OCI-LY7 (cell line): ENCODE measurements at regions of chr11 and their contacts with region 1.

Region 1: GRCh38 chr11:129922674-129923073 is 27.3 kb upstream of the NFRKB start:
- DNase-seq: no peak
- H3K4me3 ChIP-seq: no peak overlapping the region
- H3K27ac ChIP-seq: no peak overlapping the region
- H3K4me1 ChIP-seq: peaks cover 20% of the 10 kb centered on the region
- CTCF ChIP-seq: no peak

Region 2: DNA sequence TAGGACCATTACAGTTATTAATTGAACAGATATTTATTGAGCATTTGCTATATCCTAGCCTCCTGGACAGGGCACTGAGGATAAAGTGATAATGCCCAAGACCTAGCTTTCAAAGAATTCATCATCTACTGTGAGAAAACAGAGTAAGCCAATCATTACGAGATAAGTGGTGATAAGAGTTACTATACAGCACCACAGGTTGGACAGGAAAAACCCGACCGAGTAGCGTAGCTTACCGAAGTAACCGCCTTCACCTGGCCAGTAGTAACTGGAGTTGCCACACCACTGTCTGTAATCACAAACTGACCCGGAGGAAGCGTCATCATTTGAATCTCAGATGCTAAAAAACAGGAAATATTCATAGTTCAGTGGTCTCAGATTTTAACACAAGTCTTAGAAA is 17.3 kb before region 1 on chr11:
- CTCF ChIA-PET with region 1: no interaction called
- POLR2A ChIA-PET with region 1: interaction called, 7 read pairs
- intact Hi-C with region 1: loop called (anchors 2 kb)
- DNase-seq: no peak
- H3K4me3 ChIP-seq: no peak overlapping the region
- H3K27ac ChIP-seq: no peak overlapping the region
- H3K4me1 ChIP-seq: no peaks in the 10 kb centered on the region
- CTCF ChIP-seq: no peak

Region 3: DNA sequence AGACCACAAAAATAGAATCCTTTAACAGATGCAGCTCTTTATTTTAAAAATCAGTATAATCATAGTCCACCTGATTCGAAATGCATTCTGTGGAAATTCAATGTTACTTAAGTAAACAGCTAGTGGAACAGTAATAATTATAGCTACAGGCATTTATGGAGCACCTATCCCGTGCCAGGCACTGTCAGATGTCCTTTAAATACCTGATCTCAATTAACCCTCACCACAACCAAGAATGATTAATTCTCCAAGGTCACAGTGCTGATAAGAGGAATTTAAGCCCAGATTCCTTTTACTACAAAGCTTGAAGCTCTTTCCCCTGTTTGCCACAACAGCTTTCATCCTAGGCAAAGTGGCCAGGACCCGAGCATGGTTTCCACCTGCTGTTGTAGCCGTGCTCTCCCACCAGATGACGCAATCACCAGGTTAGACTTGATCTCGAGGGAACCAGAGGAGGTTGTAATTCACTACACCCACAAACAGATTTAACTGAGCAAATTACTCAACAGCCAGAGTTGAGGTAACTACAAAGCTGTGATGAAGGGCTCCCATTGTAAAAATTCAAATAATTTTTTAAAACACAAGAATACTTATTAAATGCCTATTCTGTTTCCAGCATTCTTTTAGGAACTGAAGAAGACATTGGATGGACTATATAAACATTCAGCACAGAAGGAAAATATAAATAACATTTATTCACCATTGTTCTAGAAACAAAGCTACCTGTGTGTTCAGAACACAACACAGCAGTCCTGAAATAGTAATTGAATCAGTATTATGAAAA is 69.7 kb after region 1 on chr11:
- CTCF ChIA-PET with region 1: interaction called, 3 read pairs
- POLR2A ChIA-PET with region 1: interaction called, 4 read pairs
- intact Hi-C with region 1: loop called (anchors 2 kb)
- DNase-seq: peak; percentile 91
- H3K4me3 ChIP-seq: no peak overlapping the region
- H3K27ac ChIP-seq: peak overlapping the region; percentile 45
- H3K4me1 ChIP-seq: peaks cover 56% of the 10 kb centered on the region
- CTCF ChIP-seq: peak; percentile 92